AG04450 (cell line): ENCODE measurements at regions of chr4 and their contacts with region 1.

Region 1: GRCh38 chr4:121900132-121900983 is 30.1 kb upstream of the BBS7 start:
- DNase-seq: peak; percentile 36
- H3K4me3 ChIP-seq: no peak overlapping the region
- H3K27ac ChIP-seq: no peak overlapping the region
- H3K27me3 ChIP-seq: no peaks in the 10 kb centered on the region
- CTCF ChIP-seq: peak; percentile 84

Region 2: GRCh38 chr4:121913667-121914066 is 13.3 kb after region 1 on chr4:
- CTCF ChIA-PET with region 1: interaction called, 12 read pairs
- POLR2A ChIA-PET with region 1: no interaction called
- DNase-seq: no peak
- H3K4me3 ChIP-seq: no peak overlapping the region
- H3K27ac ChIP-seq: no peak overlapping the region
- H3K27me3 ChIP-seq: no peaks in the 10 kb centered on the region
- CTCF ChIP-seq: no peak

Region 3: GRCh38 chr4:122052677-122053076 is 152.3 kb after region 1 on chr4:
- CTCF ChIA-PET with region 1: no interaction called
- POLR2A ChIA-PET with region 1: no interaction called
- DNase-seq: no peak
- H3K4me3 ChIP-seq: no peak overlapping the region
- H3K27ac ChIP-seq: no peak overlapping the region
- H3K27me3 ChIP-seq: no peaks in the 10 kb centered on the region
- CTCF ChIP-seq: no peak

Region 4: DNA sequence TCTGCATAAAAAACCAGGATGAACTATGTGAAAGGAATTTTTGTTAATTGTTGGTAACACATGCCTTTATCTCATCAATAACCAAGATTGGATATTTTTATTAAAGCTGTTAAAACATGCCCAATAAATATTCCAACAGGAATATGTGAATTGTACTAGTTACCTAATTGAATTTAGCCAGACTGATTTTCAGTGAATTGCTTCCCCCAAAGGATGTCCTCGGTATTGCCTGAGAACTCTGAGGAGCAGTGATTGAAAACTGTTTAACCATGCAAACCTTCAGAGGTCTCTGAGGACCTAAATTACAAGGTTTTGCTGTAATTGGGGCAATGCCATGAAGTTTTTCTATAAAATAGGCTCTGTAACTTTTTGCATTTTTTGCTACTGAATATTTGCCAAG is 318.4 kb after region 1 on chr4:
- CTCF ChIA-PET with region 1: interaction called, 52 read pairs
- POLR2A ChIA-PET with region 1: no interaction called
- DNase-seq: no peak
- H3K4me3 ChIP-seq: no peak overlapping the region
- H3K27ac ChIP-seq: no peak overlapping the region
- H3K27me3 ChIP-seq: no peaks in the 10 kb centered on the region
- CTCF ChIP-seq: peak; percentile 59

Region 5: DNA sequence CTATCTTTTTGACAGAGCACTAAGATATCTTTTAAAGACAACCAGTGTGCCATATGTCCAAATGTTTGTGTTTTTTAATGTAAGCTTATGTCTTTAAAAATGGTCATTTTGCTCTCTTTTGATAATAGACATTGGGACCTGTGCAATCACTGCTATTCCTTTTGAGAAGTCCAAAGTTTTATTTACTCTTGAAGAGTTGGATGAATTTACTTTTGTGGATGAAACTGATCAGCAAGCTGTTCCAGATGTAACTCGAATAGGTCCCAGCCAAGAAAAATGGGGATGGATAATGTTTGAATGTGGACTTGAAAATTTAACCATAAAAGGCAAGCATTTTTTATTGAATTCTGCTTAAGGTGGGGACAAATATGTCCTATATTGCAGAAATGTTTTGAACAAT is 349.0 kb after region 1 on chr4:
- CTCF ChIA-PET with region 1: interaction called, 18 read pairs
- POLR2A ChIA-PET with region 1: no interaction called
- DNase-seq: no peak
- H3K4me3 ChIP-seq: no peak overlapping the region
- H3K27ac ChIP-seq: no peak overlapping the region
- H3K27me3 ChIP-seq: no peaks in the 10 kb centered on the region
- CTCF ChIP-seq: no peak